Activated T-helper 1 cell treated with anti-CD3 and anti-CD28 coated beads, Interleukin-12 subunit alpha, Interleukin-12 subunit beta, Interleukin-2, Interleukin-4 antibody, amounts not matched to agents 30 ng/mL and 10 ng/mL and 1 ng/mL, durations not matched to agents 14 hours and 24 hours and 36 hours (primary cell): ENCODE measurements at regions of chr11 and their contacts with region 1.

Region 1: DNA sequence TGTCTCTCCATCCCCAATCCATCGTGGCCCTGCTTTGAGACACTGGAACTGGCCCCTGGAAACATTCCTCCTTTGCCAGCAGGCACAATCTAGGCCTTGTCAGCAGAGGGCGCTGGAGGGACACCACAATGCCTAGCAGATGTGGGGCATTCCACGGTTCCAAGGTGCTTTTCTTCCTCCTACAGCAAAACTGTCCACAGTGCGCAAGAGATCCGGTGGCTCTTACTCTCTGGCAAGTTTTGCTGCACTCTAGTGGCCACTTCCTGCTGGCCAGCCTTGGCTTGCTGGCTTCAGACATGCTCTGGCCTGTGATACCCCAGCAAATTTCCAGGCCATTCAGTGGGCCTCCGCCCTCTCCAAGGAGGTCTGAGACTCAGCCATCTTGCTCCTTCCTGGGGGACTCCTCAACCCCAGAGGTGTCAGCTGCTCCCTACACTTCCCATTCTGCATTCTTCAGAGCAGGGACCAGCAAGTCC is 17.1 kb upstream of the RBM4B start:
- DNase-seq: peak; percentile 69
- H3K4me3 Mint-ChIP-seq: no peak overlapping the region
- H3K27ac Mint-ChIP-seq: no peak overlapping the region
- H3K4me1 Mint-ChIP-seq: no peaks in the 10 kb centered on the region
- H3K27me3 Mint-ChIP-seq: peaks cover 2% of the 10 kb centered on the region

Region 2: DNA sequence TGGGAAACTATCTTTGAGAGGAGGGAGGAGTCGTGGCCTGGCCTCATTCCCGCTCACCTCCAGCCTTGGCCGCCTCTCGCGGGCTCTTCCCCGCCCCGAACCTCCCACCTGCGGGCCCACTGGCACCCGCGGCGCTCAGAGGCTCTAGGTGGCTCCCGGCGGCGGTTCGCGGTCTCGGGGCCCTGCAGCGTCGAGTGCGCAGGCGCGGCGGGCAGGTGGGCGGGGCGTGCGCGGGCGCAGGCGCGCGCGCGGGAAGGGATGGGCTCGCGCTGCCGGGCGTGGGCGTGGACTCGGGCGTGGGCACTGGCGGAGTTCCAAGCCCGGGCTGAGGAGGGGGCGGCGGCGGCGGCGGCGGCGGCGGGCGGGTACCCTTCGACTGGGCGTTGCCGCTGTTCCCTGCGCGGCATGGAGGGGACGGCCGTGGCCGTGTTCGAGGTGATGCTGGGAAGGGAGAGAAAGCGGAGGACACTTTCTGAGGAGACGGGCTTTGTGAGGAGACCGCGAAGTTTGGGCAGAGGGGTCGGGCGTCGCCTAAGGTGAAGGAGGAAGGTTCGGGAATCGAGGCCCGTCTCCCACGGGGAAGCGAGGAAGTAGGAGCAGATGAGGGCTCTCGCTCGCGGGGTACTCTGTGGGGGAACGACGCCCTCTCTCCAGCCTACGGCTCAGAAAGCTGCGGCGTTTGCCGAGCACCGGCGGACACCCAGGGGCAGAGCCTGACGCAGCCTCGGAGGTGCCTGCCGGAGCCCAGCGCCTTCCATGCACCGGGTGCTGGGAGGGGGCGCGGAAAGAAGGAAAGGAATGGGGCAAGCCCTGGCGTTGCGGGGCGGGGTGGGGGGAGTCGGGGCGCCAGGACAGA is 49.9 kb after region 1 on chr11:
- intact Hi-C with region 1: loop called (anchors 2 kb)
- DNase-seq: peak; percentile 91
- H3K4me3 Mint-ChIP-seq: peak overlapping the region; percentile 90
- H3K27ac Mint-ChIP-seq: peak overlapping the region; percentile 80
- H3K4me1 Mint-ChIP-seq: no peaks in the 10 kb centered on the region
- H3K27me3 Mint-ChIP-seq: peaks cover 2% of the 10 kb centered on the region

Region 3: DNA sequence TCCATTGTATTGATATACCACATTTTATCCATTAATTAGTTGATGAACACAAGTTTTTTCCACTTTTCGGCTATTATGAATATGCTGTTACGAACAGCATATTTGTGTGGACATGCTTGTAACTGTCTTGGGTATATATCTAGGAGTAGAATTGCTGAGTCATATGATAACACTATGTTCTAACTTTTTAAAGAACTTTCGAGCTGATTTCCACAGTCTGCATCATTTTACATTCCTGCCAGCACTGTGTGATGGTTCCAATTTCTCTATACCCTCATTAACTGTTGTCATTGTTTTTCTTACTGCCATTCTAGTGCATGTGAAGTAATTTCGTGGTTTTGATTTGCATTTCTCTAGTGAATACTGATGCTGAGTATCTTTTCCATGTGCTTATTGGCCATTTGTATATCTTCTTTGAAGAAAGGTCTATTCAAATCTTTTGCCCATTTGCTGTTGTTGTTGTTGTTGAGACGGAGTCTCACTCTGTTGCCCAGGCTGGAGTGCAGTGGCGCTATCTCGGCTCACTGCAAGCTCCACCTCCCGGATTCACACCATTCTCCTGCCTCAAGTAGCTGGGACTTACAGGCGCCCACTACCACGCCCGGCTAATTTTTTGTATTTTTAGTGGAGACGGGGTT is 141.1 kb after region 1 on chr11:
- intact Hi-C with region 1: loop called (anchors 1 kb)
- DNase-seq: no peak
- H3K4me3 Mint-ChIP-seq: no peak overlapping the region
- H3K27ac Mint-ChIP-seq: no peak overlapping the region
- H3K4me1 Mint-ChIP-seq: peaks cover 22% of the 10 kb centered on the region
- H3K27me3 Mint-ChIP-seq: no peaks in the 10 kb centered on the region

Region 4: DNA sequence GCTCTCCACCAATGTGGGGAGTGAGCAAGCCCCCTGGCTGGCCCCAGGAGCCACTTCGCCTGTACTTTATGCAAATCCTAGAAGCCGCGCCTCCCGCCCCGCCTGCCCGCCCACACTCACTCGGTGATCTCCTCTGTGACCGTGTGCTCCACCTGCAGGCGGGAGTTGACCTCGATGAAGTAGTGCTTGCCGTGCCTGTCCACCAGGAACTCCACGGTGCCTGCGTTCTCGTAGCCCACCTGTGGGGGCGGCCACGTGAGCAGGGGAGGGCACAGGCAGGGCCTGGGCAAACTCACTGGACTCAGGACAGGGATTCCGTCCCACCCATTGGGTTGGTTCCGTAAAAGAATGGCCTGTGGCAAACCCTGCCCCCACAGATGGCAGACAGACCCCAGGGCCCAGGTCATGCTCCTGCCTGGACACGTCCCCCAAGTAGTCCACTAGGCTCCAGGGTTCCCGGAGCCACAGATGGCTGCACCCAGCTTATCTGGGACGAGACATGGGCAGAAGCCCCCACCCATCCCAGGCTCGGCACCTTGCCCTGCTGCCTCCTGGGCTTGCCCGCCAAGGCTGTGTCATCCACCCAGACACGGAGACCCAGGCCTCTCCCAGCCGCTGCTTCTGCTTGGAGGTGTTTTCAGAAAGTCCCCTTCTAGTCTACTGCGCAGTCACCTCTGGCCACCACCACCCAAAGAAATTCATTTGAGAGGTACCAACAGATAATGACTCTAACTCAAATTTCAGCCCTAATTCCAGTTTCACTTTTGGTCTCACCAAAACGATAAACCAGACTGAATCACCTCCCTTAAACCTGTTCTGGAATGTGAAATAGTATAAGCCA is 174.2 kb after region 1 on chr11:
- intact Hi-C with region 1: loop called (anchors 1 kb)
- DNase-seq: peak; percentile 69
- H3K4me3 Mint-ChIP-seq: no peak overlapping the region
- H3K27ac Mint-ChIP-seq: no peak overlapping the region
- H3K4me1 Mint-ChIP-seq: peaks cover 7% of the 10 kb centered on the region
- H3K27me3 Mint-ChIP-seq: peaks cover 1% of the 10 kb centered on the region

Region 5: DNA sequence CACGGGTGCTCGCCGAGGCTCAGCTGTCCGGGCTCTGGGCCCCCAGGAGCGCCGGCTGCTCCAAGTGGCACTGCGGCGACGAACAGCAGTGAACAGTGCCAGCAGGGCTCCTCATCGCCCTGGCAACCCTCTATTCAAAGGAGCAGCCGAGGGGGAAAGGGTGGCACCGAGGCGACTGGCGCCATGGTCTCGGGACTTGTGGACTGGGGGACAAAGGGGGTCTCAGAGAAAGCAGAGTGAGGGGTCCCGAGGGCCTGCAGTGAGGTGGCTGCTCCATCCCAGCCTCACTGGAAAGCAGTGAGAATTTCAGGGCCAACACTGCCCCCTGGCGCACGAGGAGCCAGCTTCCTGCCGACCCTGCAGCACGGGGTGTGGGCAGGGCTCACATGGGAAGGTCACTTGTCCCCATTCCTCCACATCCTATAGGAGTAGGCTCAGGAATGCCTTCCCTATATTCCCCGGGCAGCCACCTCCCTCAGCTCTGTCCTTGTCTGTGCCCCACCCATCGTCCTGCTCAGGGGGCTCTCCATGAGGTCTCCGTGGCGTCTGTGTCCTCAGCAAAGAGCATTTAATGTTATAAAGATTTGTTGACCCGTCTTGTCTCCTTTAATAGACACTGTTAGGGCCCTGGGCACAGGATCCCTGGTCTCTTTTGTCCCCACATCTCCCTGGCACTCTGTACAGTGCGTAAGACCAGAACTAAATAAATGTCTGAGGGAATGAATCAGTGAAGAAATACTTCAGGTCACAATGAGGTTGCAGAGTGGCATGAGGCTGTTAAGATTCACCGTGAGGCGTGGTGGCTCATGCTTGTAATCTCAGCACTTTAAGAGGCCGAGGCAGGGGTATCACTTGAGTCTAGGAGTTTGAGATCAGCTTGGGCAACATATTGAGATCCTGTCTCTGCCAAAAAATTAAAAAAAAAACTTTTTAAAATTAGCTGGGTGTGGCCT is 188.5 kb after region 1 on chr11:
- intact Hi-C with region 1: loop called (anchors 1 kb)
- DNase-seq: peak; percentile 38
- H3K4me3 Mint-ChIP-seq: no peak overlapping the region
- H3K27ac Mint-ChIP-seq: no peak overlapping the region
- H3K4me1 Mint-ChIP-seq: peaks cover 15% of the 10 kb centered on the region
- H3K27me3 Mint-ChIP-seq: no peaks in the 10 kb centered on the region

Region 6: GRCh38 chr11:67071420-67072284 is 376.9 kb after region 1 on chr11:
- intact Hi-C with region 1: loop called (anchors 1 kb)
- DNase-seq: peak; percentile 62
- H3K4me3 Mint-ChIP-seq: peak overlapping the region; percentile 24
- H3K27ac Mint-ChIP-seq: no peak overlapping the region
- H3K4me1 Mint-ChIP-seq: no peaks in the 10 kb centered on the region
- H3K27me3 Mint-ChIP-seq: peaks cover 7% of the 10 kb centered on the region